CD8-positive, alpha-beta T cell (primary cell): ENCODE measurements at regions of chr3 and their contacts with region 1.

Region 1: GRCh38 chr3:13479581-13480339 is at the start of gene HDAC11:
- DNase-seq: peak; percentile 95 to 99 (median 98)
- ATAC-seq: peak; percentile 93
- H3K4me3 ChIP-seq: peak within 1 kb of the TSS; percentile 83 to 96
- H3K4me3 Mint-ChIP-seq: peak within 1 kb of the TSS; percentile 95
- H3K27ac ChIP-seq: peak within 1 kb of the TSS; percentile 90
- H3K27ac Mint-ChIP-seq: peak within 1 kb of the TSS; percentile 96
- H3K4me1 ChIP-seq: peaks cover 18% of the 10 kb centered on the region
- H3K4me1 Mint-ChIP-seq: peaks cover 17% of the 10 kb centered on the region
- H3K27me3 ChIP-seq: no peaks in the 10 kb centered on the region
- H3K27me3 Mint-ChIP-seq: no peaks in the 10 kb centered on the region
- CTCF ChIP-seq: no peak
- total RNA-seq, gene HDAC11: 4.6 to 5.8 TPM

Region 2: DNA sequence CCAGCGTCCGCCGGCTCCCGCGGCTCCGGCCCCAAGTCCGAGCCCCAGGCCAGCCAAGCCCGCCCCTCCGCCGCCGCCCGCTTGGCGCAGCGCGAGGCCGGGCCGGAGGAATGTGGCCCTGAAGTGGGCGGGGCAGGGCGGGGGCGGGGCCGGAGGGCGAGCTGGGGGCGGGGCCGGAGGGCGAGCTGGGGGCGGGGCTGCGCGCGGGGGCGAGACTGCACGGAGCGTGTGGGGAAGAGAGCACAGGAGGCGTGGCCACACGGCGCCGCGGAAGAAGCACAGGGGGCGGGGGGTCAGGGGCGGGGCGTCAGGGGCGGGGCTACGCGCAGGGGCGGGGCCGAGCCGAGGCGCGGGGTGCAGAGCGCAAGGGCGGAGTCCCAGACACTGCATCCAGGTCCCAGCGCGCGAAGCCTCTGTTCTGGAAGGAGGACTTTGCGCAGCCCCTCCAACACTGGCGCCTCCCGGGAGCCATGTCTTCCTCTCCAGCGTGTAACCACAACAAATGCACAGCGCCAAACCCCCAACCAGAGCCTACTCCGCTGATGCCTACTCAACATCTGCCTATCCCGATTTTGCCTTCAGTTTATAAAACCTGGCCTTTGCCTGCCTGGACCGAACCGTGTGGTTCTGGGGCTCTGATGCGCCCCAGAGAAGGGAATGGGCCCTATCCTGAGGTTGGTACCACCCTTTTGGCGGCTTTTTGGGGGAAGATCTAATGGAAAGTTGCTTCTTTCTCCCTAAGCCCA is 512.0 kb before region 1 on chr3:
- CTCF ChIA-PET with region 1: no interaction called
- POLR2A ChIA-PET with region 1: no interaction called
- intact Hi-C with region 1: loop called in 1 of 2 experiments (anchors 1 kb)
- DNase-seq: peak; percentile 82 to 95 (median 89)
- ATAC-seq: peak; percentile 97
- H3K4me3 ChIP-seq: peak overlapping the region; percentile 42 to 63
- H3K4me3 Mint-ChIP-seq: peak overlapping the region; percentile 82
- H3K27ac ChIP-seq: no peak overlapping the region
- H3K27ac Mint-ChIP-seq: peak overlapping the region; percentile 69
- H3K4me1 ChIP-seq: peaks cover 59% of the 10 kb centered on the region
- H3K4me1 Mint-ChIP-seq: peaks cover 74% of the 10 kb centered on the region
- H3K27me3 ChIP-seq: no peaks in the 10 kb centered on the region
- H3K27me3 Mint-ChIP-seq: no peaks in the 10 kb centered on the region
- CTCF ChIP-seq: no peak

Region 3: DNA sequence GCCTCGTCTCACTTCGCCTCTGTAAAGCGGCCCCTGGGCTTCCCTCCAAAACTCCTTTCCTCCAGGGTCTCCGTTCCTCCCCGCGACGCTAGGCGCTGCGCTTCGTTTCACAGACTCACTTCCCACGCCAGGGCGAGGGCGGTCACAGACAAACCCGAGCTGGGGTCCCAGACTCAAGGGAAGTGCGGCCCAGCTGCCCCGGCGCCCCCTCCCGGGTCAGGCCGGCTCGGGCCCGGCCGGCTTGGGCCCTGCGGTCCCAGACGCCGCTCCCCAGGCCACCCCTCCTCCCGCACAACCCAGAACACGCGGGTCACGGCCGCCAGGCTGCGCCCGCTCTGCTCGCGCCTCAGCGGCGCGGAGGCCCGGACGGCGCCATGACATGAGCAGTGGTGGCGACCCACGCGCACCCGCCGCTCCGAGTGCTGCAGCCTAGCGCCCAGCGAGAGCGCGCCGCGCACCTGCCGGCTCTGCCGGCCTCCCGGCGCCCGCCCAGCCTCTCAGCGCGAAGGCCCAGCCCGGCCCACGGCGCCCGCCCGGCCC is 60.2 kb before region 1 on chr3:
- CTCF ChIA-PET with region 1: interaction called, 3 read pairs
- POLR2A ChIA-PET with region 1: interaction called, 6 read pairs
- intact Hi-C with region 1: loop called in 1 of 2 experiments (anchors 1 kb)
- DNase-seq: peak; percentile 40 to 83 (median 66)
- ATAC-seq: peak; percentile 29
- H3K4me3 ChIP-seq: peak overlapping the region; percentile 72 to 82
- H3K4me3 Mint-ChIP-seq: peak overlapping the region; percentile 91
- H3K27ac ChIP-seq: peak overlapping the region; percentile 74 to 89
- H3K27ac Mint-ChIP-seq: peak overlapping the region; percentile 96
- H3K4me1 ChIP-seq: peaks cover 57% of the 10 kb centered on the region
- H3K4me1 Mint-ChIP-seq: peaks cover 76% of the 10 kb centered on the region
- H3K27me3 ChIP-seq: no peaks in the 10 kb centered on the region
- H3K27me3 Mint-ChIP-seq: no peaks in the 10 kb centered on the region
- CTCF ChIP-seq: no peak

Region 4: GRCh38 chr3:13582381-13583250 is 102.9 kb after region 1 on chr3:
- CTCF ChIA-PET with region 1: no interaction called
- POLR2A ChIA-PET with region 1: no interaction called
- intact Hi-C with region 1: no loop called
- DNase-seq: no peak
- ATAC-seq: no peak
- H3K4me3 ChIP-seq: no peak overlapping the region
- H3K4me3 Mint-ChIP-seq: no peak overlapping the region
- H3K27ac ChIP-seq: no peak overlapping the region
- H3K27ac Mint-ChIP-seq: no peak overlapping the region
- H3K4me1 ChIP-seq: peaks cover 5% of the 10 kb centered on the region
- H3K4me1 Mint-ChIP-seq: peaks cover 24% of the 10 kb centered on the region
- H3K27me3 ChIP-seq: no peaks in the 10 kb centered on the region
- H3K27me3 Mint-ChIP-seq: no peaks in the 10 kb centered on the region
- CTCF ChIP-seq: no peak

Region 5: GRCh38 chr3:13648060-13649001 is 168.6 kb after region 1 on chr3:
- CTCF ChIA-PET with region 1: interaction called, 71 read pairs
- POLR2A ChIA-PET with region 1: interaction called, 3 read pairs
- intact Hi-C with region 1: no loop called
- DNase-seq: peak; percentile 56 to 88 (median 75)
- ATAC-seq: peak; percentile 27
- H3K4me3 ChIP-seq: no peak overlapping the region
- H3K4me3 Mint-ChIP-seq: no peak overlapping the region
- H3K27ac ChIP-seq: no peak overlapping the region
- H3K27ac Mint-ChIP-seq: no peak overlapping the region
- H3K4me1 ChIP-seq: peaks cover 33% of the 10 kb centered on the region
- H3K4me1 Mint-ChIP-seq: peaks cover 39% of the 10 kb centered on the region
- H3K27me3 ChIP-seq: peaks cover 0 to 3% of the 10 kb centered on the region in 2 experiments
- H3K27me3 Mint-ChIP-seq: peaks cover 15% of the 10 kb centered on the region
- CTCF ChIP-seq: peak; percentile 94

Region 6: GRCh38 chr3:13879655-13880204 is 400.0 kb after region 1 on chr3 and contains the start of gene WNT7A:
- CTCF ChIA-PET with region 1: no interaction called
- POLR2A ChIA-PET with region 1: interaction called, 3 read pairs
- intact Hi-C with region 1: loop called (anchors 5 kb)
- DNase-seq: peak in 5 of 9 experiments; percentile 33 to 69 (median 65)
- ATAC-seq: peak; percentile 39
- H3K4me3 ChIP-seq: peak within 1 kb of the TSS; percentile 50 to 77
- H3K4me3 Mint-ChIP-seq: peak within 1 kb of the TSS; percentile 83
- H3K27ac ChIP-seq: peak within 1 kb of the TSS in 1 of 2 experiments; percentile 35
- H3K27ac Mint-ChIP-seq: peak within 1 kb of the TSS; percentile 22
- H3K4me1 ChIP-seq: peaks cover 24% of the 10 kb centered on the region
- H3K4me1 Mint-ChIP-seq: peaks cover 13% of the 10 kb centered on the region
- H3K27me3 ChIP-seq: peaks cover 0 to 13% of the 10 kb centered on the region in 2 experiments
- H3K27me3 Mint-ChIP-seq: peaks cover 29% of the 10 kb centered on the region
- CTCF ChIP-seq: no peak
- total RNA-seq, gene WNT7A: 5.1 to 5.4 TPM

Region 7: GRCh38 chr3:14124615-14125190 is 644.9 kb after region 1 on chr3 and contains the starts of genes CHCHD4 and TMEM43:
- CTCF ChIA-PET with region 1: no interaction called
- POLR2A ChIA-PET with region 1: no interaction called
- intact Hi-C with region 1: loop called (anchors 5 to 10 kb)
- DNase-seq: peak; percentile 95 to 100 (median 98)
- ATAC-seq: peak; percentile 87
- H3K4me3 ChIP-seq: peak within 1 kb of the TSS; percentile 95 to 100
- H3K4me3 Mint-ChIP-seq: peak within 1 kb of the TSS; percentile 96
- H3K27ac ChIP-seq: peak within 1 kb of the TSS; percentile 89 to 92
- H3K27ac Mint-ChIP-seq: peak within 1 kb of the TSS; percentile 93
- H3K4me1 ChIP-seq: peaks cover 30% of the 10 kb centered on the region
- H3K4me1 Mint-ChIP-seq: peaks cover 56% of the 10 kb centered on the region
- H3K27me3 ChIP-seq: no peaks in the 10 kb centered on the region
- H3K27me3 Mint-ChIP-seq: no peaks in the 10 kb centered on the region
- CTCF ChIP-seq: no peak
- total RNA-seq, gene CHCHD4: 0.71 to 1.7 TPM
- total RNA-seq, gene TMEM43: 20.1 to 24.3 TPM

Region 8: GRCh38 chr3:14426063-14426620 is 946.4 kb after region 1 on chr3:
- CTCF ChIA-PET with region 1: no interaction called
- POLR2A ChIA-PET with region 1: no interaction called
- intact Hi-C with region 1: loop called in 1 of 2 experiments (anchors 10 kb)
- DNase-seq: peak in 6 of 9 experiments; percentile 45 to 84 (median 65)
- ATAC-seq: peak; percentile 54
- H3K4me3 ChIP-seq: no peak overlapping the region
- H3K4me3 Mint-ChIP-seq: peak overlapping the region; percentile 69
- H3K27ac ChIP-seq: peak overlapping the region in 1 of 2 experiments; percentile 95
- H3K27ac Mint-ChIP-seq: peak overlapping the region; percentile 99
- H3K4me1 ChIP-seq: peaks cover 84% of the 10 kb centered on the region
- H3K4me1 Mint-ChIP-seq: peaks cover 93% of the 10 kb centered on the region
- H3K27me3 ChIP-seq: no peaks in the 10 kb centered on the region
- H3K27me3 Mint-ChIP-seq: no peaks in the 10 kb centered on the region
- CTCF ChIP-seq: no peak